ENCODE measurements at regions of chr15 and their contacts with region 1.

Region 1: GRCh38 chr15:74373731-74374647 is 6.5 kb upstream of the CYP11A1 start:
- DNase-seq: peak; percentile 98
- H3K4me3 Mint-ChIP-seq: peak overlapping the region; percentile 86
- H3K27ac Mint-ChIP-seq: peak overlapping the region; percentile 78
- H3K4me1 Mint-ChIP-seq: peaks cover 43% of the 10 kb centered on the region
- H3K27me3 Mint-ChIP-seq: peaks cover 31% of the 10 kb centered on the region

Region 2: GRCh38 chr15:74245342-74245931 is 128.6 kb before region 1 on chr15:
- intact Hi-C with region 1: no loop called
- DNase-seq: peak; percentile 60
- H3K4me3 Mint-ChIP-seq: no peak overlapping the region
- H3K27ac Mint-ChIP-seq: no peak overlapping the region
- H3K4me1 Mint-ChIP-seq: no peaks in the 10 kb centered on the region
- H3K27me3 Mint-ChIP-seq: peaks cover 28% of the 10 kb centered on the region

Region 3: GRCh38 chr15:74438721-74439316 is 64.8 kb after region 1 on chr15:
- intact Hi-C with region 1: loop called (anchors 1 kb)
- DNase-seq: peak; percentile 94
- H3K4me3 Mint-ChIP-seq: no peak overlapping the region
- H3K27ac Mint-ChIP-seq: no peak overlapping the region
- H3K4me1 Mint-ChIP-seq: peaks cover 52% of the 10 kb centered on the region
- H3K27me3 Mint-ChIP-seq: no peaks in the 10 kb centered on the region

Region 4: GRCh38 chr15:74489518-74490338 is 115.7 kb after region 1 on chr15:
- intact Hi-C with region 1: loop called (anchors 1 kb)
- DNase-seq: peak; percentile 91
- H3K4me3 Mint-ChIP-seq: peak overlapping the region; percentile 6
- H3K27ac Mint-ChIP-seq: no peak overlapping the region
- H3K4me1 Mint-ChIP-seq: peaks cover 16% of the 10 kb centered on the region
- H3K27me3 Mint-ChIP-seq: no peaks in the 10 kb centered on the region

Region 5: GRCh38 chr15:74573987-74574386 is 200.0 kb after region 1 on chr15:
- intact Hi-C with region 1: no loop called
- DNase-seq: no peak
- H3K4me3 Mint-ChIP-seq: no peak overlapping the region
- H3K27ac Mint-ChIP-seq: peak overlapping the region; percentile 21
- H3K4me1 Mint-ChIP-seq: peaks cover 11% of the 10 kb centered on the region
- H3K27me3 Mint-ChIP-seq: no peaks in the 10 kb centered on the region

Region 6: GRCh38 chr15:74615508-74616365 is 241.7 kb after region 1 on chr15 and contains the start of gene CLK3:
- intact Hi-C with region 1: loop called (anchors 1 kb)
- DNase-seq: peak; percentile 99
- H3K4me3 Mint-ChIP-seq: peak within 1 kb of the TSS; percentile 95
- H3K27ac Mint-ChIP-seq: peak within 1 kb of the TSS; percentile 97
- H3K4me1 Mint-ChIP-seq: peaks cover 41% of the 10 kb centered on the region
- H3K27me3 Mint-ChIP-seq: no peaks in the 10 kb centered on the region
- total RNA-seq, gene CLK3: 112 and 113 TPM in 2 replicates

Region 7: GRCh38 chr15:74768771-74769342 is 394.9 kb after region 1 on chr15:
- intact Hi-C with region 1: loop called (anchors 2 kb)
- DNase-seq: peak; percentile 90
- H3K4me3 Mint-ChIP-seq: no peak overlapping the region
- H3K27ac Mint-ChIP-seq: no peak overlapping the region
- H3K4me1 Mint-ChIP-seq: peaks cover 24% of the 10 kb centered on the region
- H3K27me3 Mint-ChIP-seq: peaks cover 4% of the 10 kb centered on the region

Region 8: DNA sequence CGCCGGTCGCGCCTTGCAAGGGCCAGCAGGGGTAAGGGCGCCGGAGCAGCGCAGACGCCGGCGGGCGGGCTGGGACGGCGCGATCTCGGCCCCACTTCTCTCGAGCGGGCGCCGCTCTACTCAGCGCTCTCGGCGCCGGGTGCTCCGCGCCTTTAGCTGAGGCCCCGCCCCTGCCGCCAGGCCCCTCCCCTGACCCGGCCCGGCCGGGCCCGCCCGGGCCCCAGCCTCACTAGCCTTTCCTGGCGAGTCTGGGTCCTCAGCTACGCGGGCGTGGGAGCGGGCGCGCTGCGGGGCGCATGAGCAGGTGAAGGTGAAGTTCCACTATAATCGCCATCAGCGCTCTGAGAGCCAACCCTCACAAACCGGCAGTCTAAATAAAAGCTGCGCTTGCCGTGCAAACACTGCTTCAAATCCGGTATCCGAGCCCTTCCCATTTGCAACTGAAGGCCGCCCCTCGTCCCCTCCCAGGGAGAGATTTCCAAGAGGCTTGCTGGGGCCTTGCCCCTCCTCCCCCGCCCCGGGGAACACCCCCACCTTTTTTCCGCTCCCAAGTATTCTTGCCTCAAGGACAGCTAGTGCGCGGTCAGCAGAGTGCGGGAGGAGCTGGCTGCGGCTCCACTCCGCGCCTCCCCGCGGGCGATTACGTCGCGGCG is 582.8 kb after region 1 on chr15 and contains the start of gene RPP25:
- intact Hi-C with region 1: loop called (anchors 5 kb)
- DNase-seq: peak; percentile 93
- H3K4me3 Mint-ChIP-seq: peak within 1 kb of the TSS; percentile 74
- H3K27ac Mint-ChIP-seq: no peak within 1 kb of the TSS
- H3K4me1 Mint-ChIP-seq: peaks cover 32% of the 10 kb centered on the region
- H3K27me3 Mint-ChIP-seq: peaks cover 36% of the 10 kb centered on the region
- total RNA-seq, gene RPP25: 13.1 and 13.9 TPM in 2 replicates

Measured in activated CD4-positive, alpha-beta T cell treated with anti-CD3 and anti-CD28 coated beads, Interleukin-2, amount 10 ng/mL, durations not matched to agents 24 days and 14 days (primary cell).